Left lung (tissue), 14 donors: ENCODE measurements at regions of chr3 and their contacts with region 1.

Region 1: DNA sequence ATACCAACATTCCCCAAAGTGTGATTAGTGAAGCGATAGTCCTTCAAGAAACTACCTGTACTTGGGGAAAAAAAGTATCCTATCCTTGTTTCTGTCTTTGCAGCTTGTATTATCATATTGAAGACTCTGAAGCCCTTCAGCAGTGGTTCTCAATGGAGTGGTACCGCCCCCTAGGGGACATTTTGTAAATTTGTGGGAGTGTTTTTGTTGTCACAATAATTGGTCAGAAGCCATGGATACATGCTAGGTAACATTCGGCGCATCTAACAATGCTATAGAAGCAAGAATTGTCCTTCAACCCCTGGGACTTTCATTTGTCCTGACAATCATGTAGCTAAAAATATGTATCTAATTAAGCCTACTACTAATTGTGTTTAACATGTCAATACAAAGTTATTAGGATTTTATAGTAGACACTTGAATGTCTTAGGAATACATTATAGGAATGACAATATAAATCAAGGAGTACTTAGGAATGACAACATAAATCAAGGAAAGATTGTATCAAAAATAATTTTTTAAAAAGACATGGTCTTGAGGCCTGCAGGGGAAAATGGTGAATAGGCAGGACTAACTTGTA is 53.7 kb downstream of the NMD3 start:
- DNase-seq: peak in 1 of 4 donors; percentile 27
- ATAC-seq: peak; percentile 56
- H3K4me3 ChIP-seq: no peak overlapping the region
- H3K27ac ChIP-seq: no peak overlapping the region
- H3K4me1 ChIP-seq: no peaks in the 10 kb centered on the region
- H3K27me3 ChIP-seq: no peaks in the 10 kb centered on the region
- CTCF ChIP-seq: peak; percentile 44 to 47

Region 2: DNA sequence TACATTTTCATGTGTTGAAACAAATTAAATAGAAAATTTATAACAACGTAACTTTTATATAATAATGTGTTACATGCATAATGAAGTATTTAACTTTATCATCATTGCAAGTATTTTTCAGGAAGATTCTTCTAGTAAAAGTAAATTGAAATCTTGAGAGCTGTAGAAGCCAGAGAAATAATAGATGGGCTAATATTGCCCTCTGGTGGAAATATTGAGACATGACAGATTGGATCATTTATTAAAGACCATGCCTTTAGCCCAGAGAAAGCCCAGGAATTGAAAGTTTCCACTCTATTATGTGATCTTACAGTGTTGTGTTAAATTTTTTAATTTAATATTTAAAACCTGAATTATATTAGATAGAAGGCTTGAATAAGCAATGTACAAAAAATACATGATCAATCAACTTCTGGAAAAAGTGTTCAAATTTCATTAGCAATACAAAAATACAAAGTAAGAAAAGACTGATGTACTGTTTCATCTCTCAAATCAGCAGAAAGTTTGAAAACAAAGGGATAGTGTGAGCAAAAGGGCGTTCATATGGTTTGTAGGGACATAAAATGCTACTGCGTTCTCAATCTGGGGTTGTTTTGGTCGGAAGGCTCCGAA is 149.2 kb after region 1 on chr3:
- intact Hi-C with region 1: loop called in 1 of 2 experiments (anchors 5 kb)
- DNase-seq: peak in 2 of 4 donors; percentile 31 to 48
- ATAC-seq: peak; percentile 80
- H3K4me3 ChIP-seq: no peak overlapping the region
- H3K27ac ChIP-seq: no peak overlapping the region
- H3K4me1 ChIP-seq: no peaks in the 10 kb centered on the region
- H3K27me3 ChIP-seq: no peaks in the 10 kb centered on the region
- CTCF ChIP-seq: peak; percentile 59 to 69